BJ (cell line): ENCODE measurements at regions of chr5 and their contacts with region 1.

Region 1: GRCh38 chr5:58460732-58461286 is 923 bp upstream of the PLK2 start:
- DNase-seq: no peak
- H3K4me3 ChIP-seq: peak overlapping the region; percentile 96
- H3K27me3 ChIP-seq: no peaks in the 10 kb centered on the region
- CTCF ChIP-seq: peak; percentile 82

Region 2: DNA sequence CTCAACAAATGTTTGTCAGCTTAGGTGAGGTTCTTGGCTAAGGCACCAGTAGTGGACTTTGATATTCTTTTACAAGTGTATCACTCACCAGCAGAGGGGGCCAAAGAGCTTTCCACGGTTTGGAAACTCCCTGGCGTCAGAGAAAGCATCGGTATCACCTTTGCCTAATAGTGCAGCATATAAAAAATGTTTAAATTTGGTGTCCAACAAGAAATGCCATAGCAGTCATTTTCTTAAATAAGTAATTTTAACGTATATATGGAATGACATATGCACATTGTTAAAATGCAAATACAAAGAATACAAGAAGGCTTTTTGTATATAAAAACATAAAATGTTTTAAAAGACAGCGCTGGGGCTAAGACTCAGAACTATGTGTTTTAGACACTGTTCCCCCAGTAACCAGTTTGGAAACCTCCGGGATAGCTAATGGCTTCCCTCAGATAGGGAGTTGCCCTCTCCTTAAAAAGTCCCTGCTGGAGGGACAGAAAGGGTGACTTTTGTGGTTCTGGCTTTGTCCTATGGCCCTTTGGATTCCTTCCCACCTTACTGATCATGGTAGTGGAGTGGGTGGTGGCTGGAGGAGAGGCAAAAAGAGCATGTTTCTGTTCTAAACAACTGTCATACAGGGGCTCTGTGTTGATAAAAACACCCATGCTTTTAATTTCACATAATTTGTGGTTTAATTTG is 1162.4 kb before region 1 on chr5:
- CTCF ChIA-PET with region 1: interaction called, 96 read pairs
- POLR2A ChIA-PET with region 1: interaction called, 5 read pairs
- DNase-seq: peak; percentile 19
- H3K4me3 ChIP-seq: no peak overlapping the region
- H3K27me3 ChIP-seq: no peaks in the 10 kb centered on the region
- CTCF ChIP-seq: peak; percentile 86

Region 3: DNA sequence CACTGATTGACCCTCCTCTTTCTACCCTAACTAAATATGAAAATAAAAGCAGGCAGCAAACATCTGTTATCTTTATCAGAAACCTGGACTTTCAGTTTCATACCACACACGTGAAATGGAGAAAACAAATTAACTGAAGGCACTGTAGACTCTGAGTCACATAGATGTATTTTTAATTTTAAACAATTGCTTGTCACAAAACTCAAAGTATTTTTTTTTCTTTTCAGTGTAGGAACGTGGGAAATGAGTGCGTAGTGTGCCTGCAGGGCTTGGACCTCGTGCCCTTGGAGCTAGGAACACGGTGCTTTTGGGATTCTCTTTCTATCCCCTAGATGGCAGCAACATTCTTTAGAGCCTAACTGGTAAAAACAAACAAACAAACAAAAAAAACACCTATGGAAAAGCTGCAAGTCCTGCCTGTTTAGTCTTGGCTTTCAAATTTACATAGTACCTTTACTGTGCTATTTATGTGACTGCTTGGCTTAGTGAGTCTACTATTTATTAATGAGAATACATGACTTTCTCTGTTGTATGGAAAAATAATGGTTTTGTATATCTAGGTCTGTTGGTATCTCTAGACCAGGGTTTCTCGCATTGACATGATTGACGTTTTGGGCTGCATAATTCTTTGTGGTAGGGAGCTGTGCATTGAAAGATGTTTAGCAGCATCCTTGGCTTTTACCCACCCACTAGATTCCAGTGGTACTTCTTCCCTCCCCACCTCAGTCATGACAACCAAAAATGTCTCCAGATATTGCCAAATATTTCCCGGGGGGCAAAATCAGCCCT is 961.4 kb before region 1 on chr5:
- CTCF ChIA-PET with region 1: interaction called, 28 read pairs
- POLR2A ChIA-PET with region 1: interaction called, 5 read pairs
- DNase-seq: no peak
- H3K4me3 ChIP-seq: no peak overlapping the region
- H3K27me3 ChIP-seq: no peaks in the 10 kb centered on the region
- CTCF ChIP-seq: peak; percentile 75

Region 4: DNA sequence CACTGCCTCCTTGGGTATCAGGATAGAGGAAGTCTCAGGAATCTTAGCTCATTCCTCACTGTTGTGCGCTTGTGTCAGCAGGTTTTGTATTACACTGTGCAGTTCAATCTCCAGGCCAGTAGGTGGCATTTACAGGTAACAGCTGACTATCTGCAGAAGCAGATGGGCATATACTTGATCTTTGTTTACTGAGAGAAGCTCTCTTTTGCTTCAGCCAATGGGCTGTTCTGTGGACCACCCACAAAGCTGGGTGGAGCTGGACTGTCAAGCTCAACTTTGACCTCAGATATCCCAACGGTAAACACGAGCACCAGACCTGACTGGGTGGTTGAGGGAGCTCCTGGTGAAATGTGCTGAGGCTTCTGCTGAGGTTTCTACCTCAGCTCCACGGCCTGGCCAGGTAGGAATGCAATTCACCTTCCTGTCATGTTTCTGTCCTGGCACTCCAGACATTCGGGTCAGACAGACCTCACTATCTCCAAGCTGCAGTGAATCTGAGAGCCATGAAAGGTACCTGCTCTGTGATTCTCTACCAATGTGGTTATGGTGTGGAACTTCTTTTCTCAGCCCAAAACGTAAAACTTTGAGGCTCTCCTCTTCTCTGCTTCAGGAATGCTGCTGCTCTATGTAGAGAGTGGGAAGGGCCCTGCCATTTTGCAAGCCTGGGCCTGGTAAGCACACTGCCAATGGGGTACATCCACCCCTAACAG is 810.3 kb before region 1 on chr5:
- CTCF ChIA-PET with region 1: interaction called, 29 read pairs
- POLR2A ChIA-PET with region 1: interaction called, 4 read pairs
- DNase-seq: peak; percentile 7
- H3K4me3 ChIP-seq: no peak overlapping the region
- H3K27me3 ChIP-seq: no peaks in the 10 kb centered on the region
- CTCF ChIP-seq: peak; percentile 79

Region 5: DNA sequence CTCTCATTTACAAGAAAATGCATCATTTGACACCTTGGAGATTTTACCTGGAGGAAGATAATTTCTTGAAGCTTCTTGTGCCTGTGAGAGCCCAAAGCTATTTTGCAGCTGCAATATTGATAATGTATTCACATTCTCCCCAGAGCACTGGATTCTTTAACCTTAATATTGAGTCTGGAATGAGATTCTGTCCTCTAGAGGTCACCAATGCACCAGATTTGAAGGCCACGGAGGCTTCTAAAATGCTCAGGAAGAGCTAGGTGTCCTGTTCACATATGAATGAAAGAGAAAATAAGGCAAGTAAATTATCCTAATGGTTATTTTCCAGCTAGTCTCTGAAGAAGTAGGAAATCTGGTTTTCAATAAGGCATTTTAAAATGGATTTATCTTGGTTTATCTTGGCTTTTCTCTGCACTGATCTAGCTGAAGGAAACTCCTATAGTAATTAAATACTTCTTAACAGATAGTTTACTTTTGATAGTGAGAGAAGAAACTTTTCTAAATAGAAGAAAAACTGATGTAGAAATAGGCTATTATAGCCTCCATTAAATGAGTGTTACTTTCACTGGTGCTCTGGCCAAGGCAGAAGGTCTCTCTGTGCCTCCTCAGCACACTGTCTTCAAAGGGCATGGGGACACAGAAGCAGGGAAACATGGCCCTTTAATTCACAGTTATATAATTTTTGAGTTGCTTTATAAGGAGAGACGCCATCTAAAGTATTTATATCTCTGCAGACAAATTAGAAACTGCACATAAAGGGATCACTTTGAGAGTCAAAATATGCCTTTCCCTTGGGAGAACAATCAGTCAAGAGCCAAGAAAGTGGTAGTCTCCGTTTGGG is 681.2 kb before region 1 on chr5:
- CTCF ChIA-PET with region 1: interaction called, 120 read pairs
- POLR2A ChIA-PET with region 1: interaction called, 4 read pairs
- DNase-seq: no peak
- H3K4me3 ChIP-seq: no peak overlapping the region
- H3K27me3 ChIP-seq: no peaks in the 10 kb centered on the region
- CTCF ChIP-seq: peak; percentile 71

Region 6: DNA sequence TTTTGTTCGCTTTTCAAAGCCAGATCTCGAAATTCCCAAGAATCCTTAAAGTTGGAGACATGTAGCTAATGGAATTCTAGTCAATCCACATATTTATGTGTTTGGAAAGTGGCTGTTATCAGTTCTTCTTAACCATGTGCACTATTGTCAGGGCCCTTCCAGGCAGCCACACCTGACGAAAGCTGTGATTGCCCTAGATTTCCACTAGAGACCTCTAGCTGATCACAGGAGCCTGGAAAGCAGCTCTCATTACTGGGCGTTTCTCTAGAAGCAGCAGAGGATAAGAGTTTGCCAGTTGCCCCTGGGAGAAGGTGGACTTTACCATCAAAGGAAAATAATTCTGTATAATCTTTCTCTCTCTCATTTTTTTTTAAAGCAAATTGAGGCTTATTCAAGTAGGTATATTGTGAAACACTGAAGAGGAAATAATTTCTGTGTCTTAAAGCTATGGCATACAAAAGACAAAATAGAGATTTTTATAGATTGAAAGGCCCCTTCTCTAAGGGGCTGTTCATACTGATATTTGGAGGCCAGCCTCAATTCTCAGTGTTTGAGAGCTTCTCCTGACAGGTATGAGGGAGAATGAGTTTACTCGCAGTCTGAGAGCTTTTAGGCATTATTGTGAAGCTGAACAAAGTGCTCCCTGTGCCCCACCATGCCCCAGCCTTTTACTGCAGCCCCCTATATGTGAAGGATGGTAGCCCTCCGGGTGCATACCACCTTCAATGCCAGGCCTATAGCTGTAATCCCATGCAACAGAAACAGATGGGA is 572.8 kb before region 1 on chr5:
- CTCF ChIA-PET with region 1: interaction called, 34 read pairs
- POLR2A ChIA-PET with region 1: no interaction called
- DNase-seq: no peak
- H3K4me3 ChIP-seq: no peak overlapping the region
- H3K27me3 ChIP-seq: no peaks in the 10 kb centered on the region
- CTCF ChIP-seq: peak; percentile 67

Region 7: GRCh38 chr5:58902765-58903164 is 442.0 kb after region 1 on chr5:
- CTCF ChIA-PET with region 1: no interaction called
- POLR2A ChIA-PET with region 1: no interaction called
- DNase-seq: no peak
- H3K4me3 ChIP-seq: no peak overlapping the region
- H3K27me3 ChIP-seq: peaks cover 2% of the 10 kb centered on the region; the same call in 1 of the 2 replicates
- CTCF ChIP-seq: no peak